Activated CD4-positive, alpha-beta memory T cell treated with anti-CD3 and anti-CD28 coated beads for 36 hours (primary cell): ENCODE measurements at regions of chr13 and their contacts with region 1.

Region 1: GRCh38 chr13:31044377-31045285 is 112.2 kb downstream of the TEX26 start:
- DNase-seq: peak; percentile 91
- H3K4me3 Mint-ChIP-seq: no peak overlapping the region
- H3K27ac Mint-ChIP-seq: peak overlapping the region; percentile 93
- H3K4me1 Mint-ChIP-seq: peaks cover 48% of the 10 kb centered on the region
- H3K27me3 Mint-ChIP-seq: peaks cover 3% of the 10 kb centered on the region

Region 2: DNA sequence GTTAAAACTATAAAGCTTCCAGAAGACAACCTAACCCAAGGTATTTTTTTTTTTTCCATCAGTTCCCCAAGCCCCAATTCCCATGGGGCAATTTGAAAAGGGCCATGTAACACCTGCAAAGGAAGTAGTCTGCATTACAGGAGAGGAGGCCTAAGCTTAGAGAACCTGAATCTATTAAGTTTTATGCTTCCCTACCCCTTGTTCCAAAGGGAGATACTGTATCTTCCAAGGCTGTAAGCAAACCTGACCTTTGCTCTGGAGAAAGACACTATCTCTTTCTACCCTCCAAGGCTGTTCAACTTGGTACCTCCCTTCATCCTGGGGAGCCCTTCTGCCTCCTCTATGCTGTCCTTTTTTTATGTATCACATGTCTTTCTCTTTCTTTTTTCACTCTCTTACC is 752.3 kb before region 1 on chr13:
- CTCF ChIA-PET with region 1: no interaction called
- POLR2A ChIA-PET with region 1: no interaction called
- intact Hi-C with region 1: no loop called
- DNase-seq: no peak
- H3K4me3 Mint-ChIP-seq: no peak overlapping the region
- H3K27ac Mint-ChIP-seq: no peak overlapping the region
- H3K4me1 Mint-ChIP-seq: peaks cover 14% of the 10 kb centered on the region
- H3K27me3 Mint-ChIP-seq: no peaks in the 10 kb centered on the region

Region 3: DNA sequence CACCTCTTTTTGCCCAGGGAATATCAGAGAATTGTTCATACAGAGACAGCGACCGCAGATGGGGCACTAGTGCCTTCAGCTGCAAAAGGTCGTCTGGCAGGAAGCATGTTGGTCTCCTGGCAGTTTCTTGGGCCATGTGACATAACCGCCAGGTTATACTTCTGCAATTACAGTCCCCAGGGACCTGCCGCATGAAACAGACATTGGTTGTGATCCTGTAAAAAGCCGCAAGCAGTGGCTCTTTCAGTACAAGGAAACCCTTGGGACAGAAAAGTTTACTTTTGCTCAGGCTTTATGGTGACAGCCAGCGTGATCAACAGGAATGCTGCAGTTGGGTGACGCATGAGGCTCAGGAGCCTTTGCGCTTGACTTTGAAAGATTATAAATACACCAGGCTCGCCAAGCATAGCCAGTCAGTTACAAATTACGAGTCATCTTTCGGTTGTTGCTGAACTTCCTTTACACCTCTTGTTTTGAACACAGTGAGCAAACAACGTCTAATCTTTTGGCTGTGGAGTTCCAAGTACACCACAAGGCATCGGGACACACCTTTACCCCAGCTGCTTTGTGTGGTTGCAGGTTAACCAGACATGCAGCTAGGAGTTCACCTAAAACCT is 672.9 kb before region 1 on chr13:
- CTCF ChIA-PET with region 1: interaction called, 4 read pairs
- POLR2A ChIA-PET with region 1: no interaction called
- intact Hi-C with region 1: loop called (anchors 1 kb)
- DNase-seq: peak; percentile 84
- H3K4me3 Mint-ChIP-seq: peak overlapping the region; percentile 55
- H3K27ac Mint-ChIP-seq: peak overlapping the region; percentile 82
- H3K4me1 Mint-ChIP-seq: peaks cover 79% of the 10 kb centered on the region
- H3K27me3 Mint-ChIP-seq: no peaks in the 10 kb centered on the region

Region 4: GRCh38 chr13:30774214-30774730 is 270.4 kb before region 1 on chr13:
- CTCF ChIA-PET with region 1: no interaction called
- POLR2A ChIA-PET with region 1: no interaction called
- intact Hi-C with region 1: loop called (anchors 1 kb)
- DNase-seq: peak; percentile 56
- H3K4me3 Mint-ChIP-seq: peak overlapping the region; percentile 0
- H3K27ac Mint-ChIP-seq: peak overlapping the region; percentile 53
- H3K4me1 Mint-ChIP-seq: peaks cover 24% of the 10 kb centered on the region
- H3K27me3 Mint-ChIP-seq: no peaks in the 10 kb centered on the region

Region 5: GRCh38 chr13:30865123-30866049 is 179.2 kb before region 1 on chr13:
- CTCF ChIA-PET with region 1: interaction called, 16 read pairs
- POLR2A ChIA-PET with region 1: no interaction called
- intact Hi-C with region 1: loop called (anchors 1 kb)
- DNase-seq: peak; percentile 70
- H3K4me3 Mint-ChIP-seq: no peak overlapping the region
- H3K27ac Mint-ChIP-seq: no peak overlapping the region
- H3K4me1 Mint-ChIP-seq: peaks cover 7% of the 10 kb centered on the region
- H3K27me3 Mint-ChIP-seq: peaks cover 9% of the 10 kb centered on the region

Region 6: DNA sequence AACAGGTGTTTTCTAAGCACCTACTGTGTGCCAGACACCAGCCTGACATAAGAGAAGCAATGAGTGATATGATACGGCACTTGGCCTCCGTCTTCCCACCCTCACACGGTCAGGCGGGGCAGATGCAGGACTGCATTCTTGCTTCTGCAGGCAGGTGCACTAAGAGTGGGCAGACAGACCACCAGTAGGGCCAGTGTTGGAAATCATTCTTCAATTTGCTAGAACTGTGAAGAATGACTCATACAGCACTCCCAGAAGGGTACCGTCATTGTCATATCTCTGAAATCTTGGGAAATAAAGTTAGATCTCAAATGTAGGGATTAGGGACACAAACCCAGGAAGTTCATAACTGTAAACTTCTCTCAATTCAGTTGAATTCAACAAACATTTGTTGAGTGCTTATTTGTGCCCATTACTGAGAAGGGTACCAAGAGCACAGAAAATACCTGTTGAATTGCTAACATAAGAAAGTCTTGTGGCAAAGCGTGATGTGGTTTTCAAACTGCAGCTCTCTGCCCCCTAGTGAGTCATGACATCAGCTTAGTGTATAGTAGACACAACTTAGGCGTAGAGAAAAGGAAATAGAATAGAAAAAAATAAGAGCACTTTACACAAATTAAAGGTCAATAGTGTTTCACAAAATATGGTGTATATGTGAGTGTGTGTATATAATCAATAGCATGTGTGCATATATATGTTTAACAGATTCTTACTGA is 36.1 kb before region 1 on chr13:
- CTCF ChIA-PET with region 1: interaction called, 4 read pairs
- POLR2A ChIA-PET with region 1: no interaction called
- intact Hi-C with region 1: loop called (anchors 1 kb)
- DNase-seq: no peak
- H3K4me3 Mint-ChIP-seq: no peak overlapping the region
- H3K27ac Mint-ChIP-seq: no peak overlapping the region
- H3K4me1 Mint-ChIP-seq: peaks cover 4% of the 10 kb centered on the region
- H3K27me3 Mint-ChIP-seq: peaks cover 18% of the 10 kb centered on the region

Region 7: GRCh38 chr13:31161828-31162590 is 117.4 kb after region 1 on chr13 and contains the start of gene HSPH1:
- CTCF ChIA-PET with region 1: interaction called, 19 read pairs
- POLR2A ChIA-PET with region 1: interaction called, 3 read pairs
- intact Hi-C with region 1: loop called (anchors 1 kb)
- DNase-seq: peak; percentile 99
- H3K4me3 Mint-ChIP-seq: peak within 1 kb of the TSS; percentile 92
- H3K27ac Mint-ChIP-seq: peak within 1 kb of the TSS; percentile 99
- H3K4me1 Mint-ChIP-seq: peaks cover 35% of the 10 kb centered on the region
- H3K27me3 Mint-ChIP-seq: no peaks in the 10 kb centered on the region
- total RNA-seq, gene HSPH1: 214 to 221 TPM

Region 8: DNA sequence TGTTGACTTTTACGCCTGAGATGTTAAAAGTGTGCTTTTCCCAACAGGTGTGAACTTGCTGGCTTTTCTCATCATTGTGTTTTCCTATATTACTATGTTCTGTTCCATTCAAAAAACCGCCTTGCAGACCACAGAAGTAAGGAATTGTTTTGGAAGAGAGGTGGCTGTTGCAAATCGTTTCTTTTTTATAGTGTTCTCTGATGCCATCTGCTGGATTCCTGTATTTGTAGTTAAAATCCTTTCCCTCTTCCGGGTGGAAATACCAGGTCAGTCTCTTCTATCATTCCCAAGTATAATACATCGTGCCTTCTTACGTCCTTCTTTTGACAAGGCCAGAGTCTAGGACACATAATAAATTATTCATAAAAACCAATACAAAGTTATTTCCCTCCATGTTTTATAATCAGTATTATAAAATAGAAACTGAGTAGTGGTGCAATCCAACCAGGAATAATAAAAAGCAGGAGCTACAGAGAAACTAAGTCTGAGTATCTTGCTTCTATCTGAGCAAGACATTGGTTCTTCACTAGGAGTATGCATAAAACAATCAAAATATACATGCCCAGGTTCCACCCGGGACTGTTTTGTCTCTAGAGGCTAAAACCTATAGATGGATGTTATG is 752.6 kb after region 1 on chr13:
- CTCF ChIA-PET with region 1: no interaction called
- POLR2A ChIA-PET with region 1: no interaction called
- intact Hi-C with region 1: no loop called
- DNase-seq: no peak
- H3K4me3 Mint-ChIP-seq: no peak overlapping the region
- H3K27ac Mint-ChIP-seq: no peak overlapping the region
- H3K4me1 Mint-ChIP-seq: peaks cover 6% of the 10 kb centered on the region
- H3K27me3 Mint-ChIP-seq: no peaks in the 10 kb centered on the region